ENCODE measurements at regions of chr2 and their contacts with region 1.

Region 1: GRCh38 chr2:211093743-211094303 is 537.4 kb downstream of the CPS1 start:
- DNase-seq: no peak
- ATAC-seq: peak; percentile 66
- H3K4me3 ChIP-seq: no peak overlapping the region
- H3K27ac ChIP-seq: no peak overlapping the region
- H3K4me1 ChIP-seq: no peaks in the 10 kb centered on the region
- H3K27me3 ChIP-seq: no peaks in the 10 kb centered on the region
- CTCF ChIP-seq: peak; percentile 43 to 52 (median 43); a peak in 5 of 6 replicates
- EP300 ChIP-seq: no peak
- POLR2A ChIP-seq: no peak
- RAD21 ChIP-seq: no peak

Region 2: DNA sequence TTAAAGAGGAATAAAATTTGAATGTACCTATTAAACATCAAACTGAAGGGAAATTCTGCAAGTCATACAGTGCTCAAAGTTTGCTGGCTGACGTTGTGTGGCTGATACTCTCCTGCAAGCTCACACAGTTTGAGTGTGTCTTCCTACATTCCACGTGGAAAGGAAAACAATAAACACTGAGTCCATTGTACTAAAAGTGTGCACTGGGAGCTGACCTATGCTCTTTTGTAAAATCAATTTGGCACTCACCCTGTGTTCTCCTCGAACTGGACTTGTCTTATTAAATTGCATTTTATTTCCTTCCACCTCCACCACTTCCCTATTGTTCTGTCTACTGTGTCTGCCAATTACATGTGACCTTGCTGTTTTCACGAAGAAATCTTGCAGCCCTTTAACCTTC is 79.4 kb before region 1 on chr2:
- CTCF ChIA-PET with region 1: no interaction called
- POLR2A ChIA-PET with region 1: no interaction called
- RAD21 ChIA-PET with region 1: no interaction called
- SMC1A ChIA-PET with region 1: no interaction called
- in situ Hi-C with region 1: no loop called
- intact Hi-C with region 1: no loop called
- DNase-seq: no peak
- ATAC-seq: no peak
- H3K4me3 ChIP-seq: no peak overlapping the region
- H3K27ac ChIP-seq: no peak overlapping the region
- H3K4me1 ChIP-seq: no peaks in the 10 kb centered on the region
- H3K27me3 ChIP-seq: no peaks in the 10 kb centered on the region
- CTCF ChIP-seq: no peak
- EP300 ChIP-seq: no peak
- POLR2A ChIP-seq: no peak
- RAD21 ChIP-seq: no peak

Region 3: DNA sequence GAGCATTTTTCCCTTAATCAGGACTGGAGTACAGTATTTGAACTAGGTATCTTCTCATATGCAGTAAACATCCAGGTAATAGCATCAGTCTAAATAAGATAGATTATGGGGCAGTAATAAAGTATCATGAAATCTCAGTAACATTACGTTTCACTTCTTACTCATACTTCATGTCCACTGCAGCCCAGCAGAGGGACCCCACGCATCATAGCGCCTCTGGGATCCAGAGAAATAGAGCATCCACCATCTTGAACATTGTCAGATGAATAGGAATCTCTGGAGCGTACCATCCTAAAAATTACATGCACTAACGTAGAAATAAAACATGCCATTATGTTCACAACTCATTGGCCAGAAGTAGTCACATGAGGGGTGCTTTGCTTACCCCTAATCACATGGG is 38.4 kb before region 1 on chr2:
- CTCF ChIA-PET with region 1: interaction called, 12 read pairs
- POLR2A ChIA-PET with region 1: no interaction called
- RAD21 ChIA-PET with region 1: interaction called, 3 read pairs
- SMC1A ChIA-PET with region 1: interaction called, 7 read pairs
- in situ Hi-C with region 1: no loop called
- intact Hi-C with region 1: no loop called
- DNase-seq: no peak
- ATAC-seq: peak; percentile 64
- H3K4me3 ChIP-seq: no peak overlapping the region
- H3K27ac ChIP-seq: no peak overlapping the region
- H3K4me1 ChIP-seq: no peaks in the 10 kb centered on the region
- H3K27me3 ChIP-seq: no peaks in the 10 kb centered on the region
- CTCF ChIP-seq: peak in 2 of 3 experiments; percentile 10 to 20; a peak in 1 of 6 replicates
- EP300 ChIP-seq: no peak
- POLR2A ChIP-seq: no peak
- RAD21 ChIP-seq: no peak

Region 4: GRCh38 chr2:211170843-211171242 is 77.0 kb after region 1 on chr2:
- CTCF ChIA-PET with region 1: no interaction called
- POLR2A ChIA-PET with region 1: no interaction called
- RAD21 ChIA-PET with region 1: no interaction called
- SMC1A ChIA-PET with region 1: no interaction called
- in situ Hi-C with region 1: no loop called
- intact Hi-C with region 1: no loop called
- DNase-seq: no peak
- ATAC-seq: no peak
- H3K4me3 ChIP-seq: no peak overlapping the region
- H3K27ac ChIP-seq: no peak overlapping the region
- H3K4me1 ChIP-seq: no peaks in the 10 kb centered on the region
- H3K27me3 ChIP-seq: no peaks in the 10 kb centered on the region
- CTCF ChIP-seq: no peak
- EP300 ChIP-seq: no peak
- POLR2A ChIP-seq: no peak
- RAD21 ChIP-seq: no peak